Caco-2 (cell line): ENCODE measurements at regions of chr9 and their contacts with region 1.

Region 1: DNA sequence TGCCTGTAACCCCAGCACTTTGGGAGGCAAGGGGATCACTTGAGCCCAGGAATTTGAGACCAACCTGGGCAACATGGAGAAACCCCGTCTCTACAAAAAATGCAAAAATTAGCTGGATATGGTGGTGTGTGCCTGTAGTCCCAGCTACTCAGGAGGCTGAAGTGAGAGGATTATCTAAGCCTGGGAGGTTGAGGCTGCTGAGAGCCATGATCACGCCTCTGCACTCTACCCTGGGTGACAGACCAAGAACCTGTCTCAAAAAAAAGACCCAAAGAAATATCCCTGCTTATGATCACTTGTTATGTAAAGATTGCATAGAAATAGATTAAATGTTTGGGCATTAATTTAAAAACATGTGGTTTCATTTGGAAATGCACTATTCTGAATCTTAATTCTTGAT is 125.1 kb downstream of the UGCG start:
- DNase-seq: no peak
- H3K4me3 ChIP-seq: no peak overlapping the region
- H3K4me3 Mint-ChIP-seq: no peak overlapping the region
- H3K27ac Mint-ChIP-seq: peak overlapping the region; percentile 50
- H3K4me1 ChIP-seq: peaks cover 14% of the 10 kb centered on the region
- H3K4me1 Mint-ChIP-seq: peaks cover 13% of the 10 kb centered on the region
- H3K27me3 ChIP-seq: no peaks in the 10 kb centered on the region
- H3K27me3 Mint-ChIP-seq: no peaks in the 10 kb centered on the region
- CTCF ChIP-seq: no peak

Region 2: DNA sequence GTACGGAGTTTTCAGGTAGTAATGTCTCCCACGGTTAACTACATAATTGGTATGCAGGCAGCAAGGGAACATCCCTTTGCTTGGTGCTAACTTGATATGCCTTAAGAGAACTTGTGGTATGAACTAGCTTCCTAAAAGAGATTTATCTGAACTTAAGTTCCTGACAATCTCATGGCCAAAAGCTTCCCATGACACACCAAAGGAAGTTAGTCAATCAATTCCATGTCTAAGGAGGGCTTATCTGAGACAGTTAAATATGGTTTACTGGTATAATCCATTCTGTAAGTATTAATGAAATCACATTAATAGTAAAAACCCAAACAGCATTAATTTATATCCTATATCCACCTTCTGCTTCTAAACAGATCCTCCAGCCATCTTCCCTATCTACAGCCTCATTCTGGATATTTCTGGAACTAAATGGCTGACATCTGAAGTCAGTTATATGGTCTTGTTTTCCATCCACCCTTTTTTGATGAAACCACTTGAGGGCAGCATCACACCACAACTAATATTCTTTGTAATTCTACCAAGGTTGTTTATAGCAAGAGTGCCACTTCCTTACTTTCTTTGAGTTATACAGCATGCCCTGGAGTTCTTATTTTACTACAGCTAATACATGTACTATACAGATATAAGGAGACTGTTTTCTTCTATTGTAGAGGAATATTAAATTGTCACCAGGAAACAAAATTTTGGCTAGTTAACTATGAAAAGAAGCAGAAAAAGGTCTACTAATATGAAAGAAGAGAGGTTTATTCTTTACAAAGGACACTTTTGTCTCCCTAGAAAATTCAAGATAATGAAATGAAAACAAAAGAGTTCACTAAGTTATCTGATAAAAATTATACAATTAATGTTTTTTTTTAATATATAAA is 261.7 kb before region 1 on chr9:
- CTCF ChIA-PET with region 1: no interaction called
- POLR2A ChIA-PET with region 1: no interaction called
- intact Hi-C with region 1: loop called (anchors 1 kb)
- DNase-seq: peak; percentile 54 to 70
- H3K4me3 ChIP-seq: no peak overlapping the region
- H3K4me3 Mint-ChIP-seq: no peak overlapping the region
- H3K27ac Mint-ChIP-seq: no peak overlapping the region
- H3K4me1 ChIP-seq: no peaks in the 10 kb centered on the region
- H3K4me1 Mint-ChIP-seq: no peaks in the 10 kb centered on the region
- H3K27me3 ChIP-seq: no peaks in the 10 kb centered on the region
- H3K27me3 Mint-ChIP-seq: no peaks in the 10 kb centered on the region
- CTCF ChIP-seq: peak; percentile 48 to 77

Region 3: DNA sequence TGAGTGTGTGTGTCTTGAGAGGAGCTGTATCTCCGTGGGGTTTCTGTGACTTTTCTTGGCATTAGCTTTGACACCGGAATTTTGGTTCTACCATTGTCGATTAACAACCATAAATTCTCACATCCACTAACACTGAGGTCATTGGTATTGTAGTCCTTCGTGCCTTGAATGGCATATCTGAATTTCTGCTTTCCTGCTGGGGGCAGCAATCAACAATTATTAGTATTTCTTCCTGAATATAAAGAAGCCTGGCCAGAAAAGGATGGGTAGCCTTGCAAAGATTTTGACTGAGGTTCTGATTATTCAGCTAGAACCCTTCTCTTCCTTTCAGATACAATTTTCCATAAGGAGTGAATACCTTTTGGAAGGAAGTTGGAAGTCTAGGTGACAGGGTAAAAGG is 193.5 kb before region 1 on chr9:
- CTCF ChIA-PET with region 1: no interaction called
- POLR2A ChIA-PET with region 1: no interaction called
- intact Hi-C with region 1: loop called (anchors 1 kb)
- DNase-seq: peak in 1 of 2 experiments; percentile 22
- H3K4me3 ChIP-seq: no peak overlapping the region
- H3K4me3 Mint-ChIP-seq: no peak overlapping the region
- H3K27ac Mint-ChIP-seq: no peak overlapping the region
- H3K4me1 ChIP-seq: no peaks in the 10 kb centered on the region
- H3K4me1 Mint-ChIP-seq: no peaks in the 10 kb centered on the region
- H3K27me3 ChIP-seq: no peaks in the 10 kb centered on the region
- H3K27me3 Mint-ChIP-seq: no peaks in the 10 kb centered on the region
- CTCF ChIP-seq: peak in 1 of 2 experiments; percentile 6